ENCODE measurements at regions of chr2 and their contacts with region 1.

Region 1: GRCh38 chr2:118539290-118539689 is 308.2 kb downstream of the EN1 start:
- DNase-seq: peak; percentile 36
- H3K4me3 Mint-ChIP-seq: no peak overlapping the region
- H3K27ac Mint-ChIP-seq: no peak overlapping the region
- H3K4me1 Mint-ChIP-seq: no peaks in the 10 kb centered on the region
- H3K27me3 Mint-ChIP-seq: no peaks in the 10 kb centered on the region
- CTCF ChIP-seq: peak; percentile 25

Region 2: GRCh38 chr2:118443596-118443995 is 95.7 kb before region 1 on chr2:
- CTCF ChIA-PET with region 1: no interaction called
- POLR2A ChIA-PET with region 1: no interaction called
- intact Hi-C with region 1: no loop called
- DNase-seq: peak; percentile 80
- H3K4me3 Mint-ChIP-seq: no peak overlapping the region
- H3K27ac Mint-ChIP-seq: peak overlapping the region; percentile 53
- H3K4me1 Mint-ChIP-seq: peaks cover 11% of the 10 kb centered on the region
- H3K27me3 Mint-ChIP-seq: no peaks in the 10 kb centered on the region
- CTCF ChIP-seq: no peak

Region 3: DNA sequence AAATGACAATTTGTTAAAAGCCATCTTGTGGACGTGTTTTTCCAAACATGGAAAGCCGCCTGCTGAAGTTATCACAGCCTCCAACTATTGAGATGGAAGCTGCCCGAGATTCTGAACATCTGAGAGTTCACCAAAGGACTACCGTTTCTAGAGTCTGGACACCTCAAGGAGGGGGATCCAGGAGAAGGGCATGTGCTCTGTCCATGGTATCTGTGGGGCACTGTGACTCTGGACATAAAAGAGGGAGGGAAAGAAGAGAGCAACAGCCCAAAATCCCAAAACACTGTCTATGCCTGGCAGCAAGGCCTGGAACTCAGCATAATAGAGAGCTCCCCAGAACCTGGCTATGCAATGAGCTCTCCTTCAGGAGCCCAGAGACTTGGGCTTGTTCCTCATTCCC is 11.7 kb before region 1 on chr2:
- CTCF ChIA-PET with region 1: interaction called, 11 read pairs
- POLR2A ChIA-PET with region 1: no interaction called
- intact Hi-C with region 1: no loop called
- DNase-seq: peak; percentile 12
- H3K4me3 Mint-ChIP-seq: no peak overlapping the region
- H3K27ac Mint-ChIP-seq: no peak overlapping the region
- H3K4me1 Mint-ChIP-seq: no peaks in the 10 kb centered on the region
- H3K27me3 Mint-ChIP-seq: no peaks in the 10 kb centered on the region
- CTCF ChIP-seq: no peak

Region 4: GRCh38 chr2:118643294-118643693 is 104.0 kb after region 1 on chr2:
- CTCF ChIA-PET with region 1: no interaction called
- POLR2A ChIA-PET with region 1: no interaction called
- intact Hi-C with region 1: no loop called
- DNase-seq: no peak
- H3K4me3 Mint-ChIP-seq: no peak overlapping the region
- H3K27ac Mint-ChIP-seq: no peak overlapping the region
- H3K4me1 Mint-ChIP-seq: peaks cover 12% of the 10 kb centered on the region
- H3K27me3 Mint-ChIP-seq: no peaks in the 10 kb centered on the region
- CTCF ChIP-seq: no peak